ENCODE measurements at regions of chr17 and their contacts with region 1.

Region 1: DNA sequence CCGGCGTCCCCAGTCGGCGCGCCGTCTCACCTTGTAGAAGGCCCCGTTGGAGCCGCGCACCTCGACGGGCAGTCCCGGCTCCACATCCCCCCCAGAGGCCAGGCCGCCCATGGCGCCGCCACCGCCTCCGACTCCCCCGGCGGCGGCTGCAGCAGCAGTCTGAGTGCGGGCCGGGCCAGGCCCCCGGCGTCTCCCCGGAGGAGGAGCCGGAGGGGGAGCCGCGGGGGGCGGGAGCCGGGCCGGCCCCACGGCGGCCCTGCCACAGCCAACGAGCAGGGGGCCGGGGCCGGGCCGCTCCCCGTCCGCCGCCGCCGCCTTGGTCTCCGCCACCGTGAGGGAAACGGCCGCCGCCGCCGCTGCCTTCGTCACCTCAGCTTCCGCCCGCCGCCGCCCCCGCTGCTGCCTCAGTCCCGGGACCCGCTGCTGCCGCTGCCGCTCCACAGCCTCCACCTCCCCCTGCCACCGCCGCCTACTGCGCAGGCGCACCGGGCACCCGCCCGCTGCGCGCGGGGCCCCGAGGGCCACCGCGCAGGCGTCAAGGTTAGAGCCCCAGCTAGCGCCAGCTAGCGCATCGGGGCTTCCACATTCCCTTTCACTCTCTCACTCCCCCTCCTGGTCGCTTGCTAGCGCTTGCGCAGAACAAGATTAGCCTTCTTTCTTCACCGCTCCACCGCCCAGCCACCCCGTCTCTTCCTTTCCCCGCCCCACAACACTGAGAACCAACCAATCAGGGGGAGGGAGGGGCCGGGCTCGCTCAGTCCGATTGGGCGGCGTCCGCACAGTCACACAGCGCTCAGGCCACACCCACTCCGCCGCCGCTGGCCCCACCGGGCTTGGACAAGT is at the start of gene FXR2:
- DNase-seq: peak; percentile 96 to 100 (median 98)
- ATAC-seq: peak; percentile 83 to 85
- H3K4me3 Mint-ChIP-seq: peak within 1 kb of the TSS; percentile 85 to 97 (median 92)
- H3K27ac Mint-ChIP-seq: peak within 1 kb of the TSS; percentile 82 to 99 (median 97)
- H3K4me1 Mint-ChIP-seq: peaks cover 20 to 41% (median 37%) of the 10 kb centered on the region in 4 donors
- H3K27me3 Mint-ChIP-seq: no peaks in the 10 kb centered on the region
- polyA plus RNA-seq, gene FXR2: 11.8 to 17.8 (median 12.4) TPM

Region 2: GRCh38 chr17:7572588-7573323 is 41.9 kb before region 1 on chr17:
- POLR2A ChIA-PET with region 1: interaction called, 16 read pairs
- DNase-seq: peak; percentile 97 to 100 (median 100)
- ATAC-seq: peak; percentile 12 to 85
- H3K4me3 Mint-ChIP-seq: peak overlapping the region; percentile 91 to 100 (median 98)
- H3K27ac Mint-ChIP-seq: peak overlapping the region; percentile 95 to 100 (median 99)
- H3K4me1 Mint-ChIP-seq: peaks cover 19 to 51% (median 44%) of the 10 kb centered on the region in 4 donors
- H3K27me3 Mint-ChIP-seq: no peaks in the 10 kb centered on the region

Region 3: DNA sequence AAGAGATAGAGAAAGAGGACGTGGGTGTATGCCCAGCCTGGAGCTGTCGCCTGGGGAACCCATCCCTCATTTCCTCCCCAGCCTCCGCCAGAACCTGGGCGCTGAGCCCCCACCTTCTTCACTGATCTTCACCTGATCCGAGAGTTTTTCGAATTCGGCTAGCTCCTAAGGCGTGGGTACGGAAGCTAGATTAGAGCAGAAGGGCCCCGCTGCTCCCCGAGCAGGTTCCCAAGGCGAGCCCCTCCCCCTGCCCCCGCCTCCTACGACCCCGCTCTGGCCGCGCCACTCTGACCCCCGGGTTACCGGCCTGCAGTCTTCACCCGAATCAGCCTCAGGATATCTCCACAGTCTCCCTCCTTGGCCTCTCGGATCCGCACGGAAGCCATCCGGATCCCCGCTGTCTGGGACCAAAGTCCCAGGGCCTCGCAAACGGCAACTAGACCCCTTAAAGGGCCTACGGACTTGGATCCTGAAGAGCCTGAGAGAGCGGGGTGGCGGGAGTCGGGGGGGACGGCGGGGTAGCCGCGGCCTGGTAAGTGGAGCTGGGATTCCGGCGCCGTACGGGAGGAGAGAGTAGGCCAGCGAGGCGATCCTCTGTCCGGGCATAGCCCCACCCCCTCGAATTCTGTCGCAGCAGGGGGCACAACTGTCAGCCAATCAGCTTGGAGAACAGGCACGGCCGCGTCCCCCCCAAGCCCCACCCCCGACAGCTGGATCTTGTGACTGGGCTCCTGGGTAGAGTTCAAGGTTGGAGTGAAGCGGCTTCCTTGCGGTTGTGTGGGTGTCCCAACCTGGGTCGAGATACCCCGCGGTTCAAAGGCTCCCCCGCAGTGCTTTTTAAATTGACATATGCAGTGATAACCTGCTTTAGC is 12.8 kb after region 1 on chr17 and contains the start of gene SAT2:
- POLR2A ChIA-PET with region 1: interaction called, 52 read pairs
- DNase-seq: peak; percentile 75 to 95 (median 80)
- ATAC-seq: peak; percentile 93 to 95
- H3K4me3 Mint-ChIP-seq: peak within 1 kb of the TSS; percentile 90 to 97 (median 94)
- H3K27ac Mint-ChIP-seq: peak within 1 kb of the TSS; percentile 79 to 98 (median 94)
- H3K4me1 Mint-ChIP-seq: peaks cover 7 to 18% (median 16%) of the 10 kb centered on the region in 4 donors
- H3K27me3 Mint-ChIP-seq: no peaks in the 10 kb centered on the region
- polyA plus RNA-seq, gene SAT2: 38.5 to 40.0 (median 39.4) TPM

Region 4: DNA sequence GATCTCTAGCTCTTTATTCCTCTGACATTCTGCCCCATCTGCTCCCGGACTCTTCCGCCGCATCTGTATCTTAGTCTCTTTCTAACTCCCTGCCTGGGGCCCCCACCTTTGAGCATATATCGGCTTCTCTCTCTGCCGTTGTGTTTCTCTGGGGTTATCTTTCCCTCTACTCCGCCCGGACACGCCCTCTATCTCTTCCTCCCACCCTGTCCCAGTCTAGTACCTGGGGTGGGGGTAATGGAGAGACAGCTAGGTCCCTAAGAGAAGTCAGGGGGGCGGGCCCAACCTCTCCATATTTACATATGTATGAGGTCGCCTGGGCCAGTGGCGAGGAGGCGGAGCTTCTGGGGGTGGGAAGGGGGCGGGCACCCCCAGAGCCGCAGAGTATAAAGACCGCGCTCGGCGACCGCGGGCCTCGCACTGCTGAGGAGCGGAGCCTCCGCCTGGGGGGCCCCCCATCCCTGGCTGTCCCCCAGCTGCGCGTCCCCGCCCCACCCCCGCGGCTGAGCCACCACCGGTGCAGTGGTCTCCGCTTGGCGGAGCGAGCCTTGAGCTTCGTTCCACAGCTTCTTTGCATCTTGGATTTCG is 36.0 kb after region 1 on chr17 and contains the start of gene ATP1B2:
- POLR2A ChIA-PET with region 1: interaction called, 13 read pairs
- DNase-seq: peak; percentile 57 to 91 (median 74)
- ATAC-seq: peak; percentile 90 to 91
- H3K4me3 Mint-ChIP-seq: peak within 1 kb of the TSS; percentile 80 to 98 (median 90)
- H3K27ac Mint-ChIP-seq: peak within 1 kb of the TSS in 9 of 10 donors; percentile 4 to 84 (median 72)
- H3K4me1 Mint-ChIP-seq: peaks cover 16 to 22% (median 19%) of the 10 kb centered on the region in 4 donors
- H3K27me3 Mint-ChIP-seq: peaks cover 3 to 27% (median 8%) of the 10 kb centered on the region in 5 donors
- polyA plus RNA-seq, gene ATP1B2: 0.17 to 0.57 TPM in 2 of 3 donors, not detected in the other